MCF 10A (cell line): ENCODE measurements at regions of chr14 and their contacts with region 1.

Region 1: DNA sequence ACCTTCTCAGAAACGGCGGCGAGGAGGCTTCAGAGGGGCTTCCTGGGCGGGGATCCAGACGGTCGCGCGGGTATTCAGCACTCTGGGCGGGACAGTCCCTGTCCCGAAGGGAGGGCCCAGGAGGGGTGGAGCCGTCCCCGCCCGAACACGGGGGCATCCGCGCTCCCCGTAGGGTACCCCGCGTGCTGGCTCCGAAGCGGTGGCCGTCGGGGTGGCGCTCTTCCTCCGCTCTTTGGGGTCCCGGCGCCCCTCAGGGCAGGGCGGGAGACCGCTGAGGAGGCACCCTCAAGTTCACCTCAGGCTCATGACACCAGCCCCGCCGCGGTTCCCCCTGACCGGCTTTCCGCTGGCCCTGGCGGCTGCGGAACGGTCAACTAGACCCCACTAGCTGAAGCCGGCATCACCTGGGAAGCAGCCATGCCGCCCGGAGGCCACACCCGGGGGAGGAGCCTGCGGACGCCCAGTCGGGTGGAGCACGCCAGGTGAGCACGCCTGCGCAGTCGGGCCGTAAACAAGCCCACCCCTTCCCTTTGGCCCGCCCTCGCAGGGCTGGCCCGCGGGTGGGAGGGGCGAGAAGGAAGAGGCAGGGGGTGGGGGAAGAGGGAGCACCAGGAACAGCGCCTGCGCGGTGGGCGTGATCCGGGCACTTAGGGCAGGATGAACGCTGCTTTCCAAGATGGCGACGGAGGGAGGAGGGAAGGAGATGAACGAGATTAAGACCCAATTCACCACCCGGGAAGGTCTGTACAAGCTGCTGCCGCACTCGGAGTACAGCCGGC is at the start of gene WDR20:
- DNase-seq: peak; percentile 98
- H3K4me3 Mint-ChIP-seq: peak within 1 kb of the TSS; percentile 97
- H3K27ac Mint-ChIP-seq: peak within 1 kb of the TSS; percentile 91
- H3K4me1 Mint-ChIP-seq: peaks cover 14% of the 10 kb centered on the region
- H3K27me3 Mint-ChIP-seq: no peaks in the 10 kb centered on the region
- CTCF ChIP-seq: no peak
- total RNA-seq, gene WDR20: 23.8 and 24.8 TPM in 2 replicates

Region 2: DNA sequence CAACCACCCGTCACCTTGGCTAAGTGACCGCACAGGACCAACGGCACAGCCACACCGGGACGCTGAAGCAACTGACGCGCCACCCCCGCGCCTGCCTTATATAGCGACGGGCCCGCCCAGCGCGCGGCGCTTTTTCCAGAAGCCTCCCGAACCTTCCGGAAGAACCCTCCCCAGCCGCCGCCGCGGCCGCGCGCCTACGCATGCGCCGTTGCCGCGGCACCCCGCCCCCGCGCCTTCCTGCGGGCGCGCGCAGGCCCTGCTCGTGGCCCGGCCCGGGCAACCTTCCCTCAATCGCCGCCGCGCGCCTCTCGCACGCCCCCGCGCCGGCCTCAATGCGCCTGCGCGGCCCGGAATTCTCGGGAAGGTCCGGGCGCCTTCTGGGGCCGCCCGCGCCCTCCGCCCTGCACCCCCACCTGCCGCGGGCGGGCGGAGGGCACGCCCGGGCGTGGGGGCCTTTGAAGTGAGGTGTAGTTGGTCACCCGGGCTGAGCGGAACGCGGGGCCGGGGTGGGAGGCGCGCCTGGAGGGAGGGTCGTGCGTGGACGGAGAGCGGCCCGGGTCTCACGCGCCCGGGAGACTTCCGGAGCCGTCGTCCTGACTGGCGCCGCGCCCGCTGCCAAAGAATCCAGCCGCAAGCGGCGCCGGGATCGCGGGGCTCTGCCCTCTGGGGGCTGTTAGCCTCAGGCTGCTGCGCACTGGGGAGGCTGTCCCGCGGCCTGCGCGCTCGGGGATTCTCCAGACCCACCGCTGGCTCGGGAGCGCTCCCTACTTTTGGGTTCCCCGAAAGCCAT is 52.3 kb before region 1 on chr14 and contains the start of gene HSP90AA1:
- CTCF ChIA-PET with region 1: no interaction called
- POLR2A ChIA-PET with region 1: interaction called, 10 read pairs
- intact Hi-C with region 1: no loop called
- DNase-seq: peak; percentile 90
- H3K4me3 Mint-ChIP-seq: peak within 1 kb of the TSS; percentile 63
- H3K27ac Mint-ChIP-seq: peak within 1 kb of the TSS; percentile 92
- H3K4me1 Mint-ChIP-seq: peaks cover 31% of the 10 kb centered on the region
- H3K27me3 Mint-ChIP-seq: no peaks in the 10 kb centered on the region
- CTCF ChIP-seq: no peak
- total RNA-seq, gene HSP90AA1: 277 and 296 TPM in 2 replicates

Region 3: GRCh38 chr14:102125546-102125945 is 13.9 kb before region 1 on chr14:
- CTCF ChIA-PET with region 1: no interaction called
- POLR2A ChIA-PET with region 1: interaction called, 13 read pairs
- intact Hi-C with region 1: no loop called
- DNase-seq: peak; percentile 38
- H3K4me3 Mint-ChIP-seq: no peak overlapping the region
- H3K27ac Mint-ChIP-seq: no peak overlapping the region
- H3K4me1 Mint-ChIP-seq: peaks cover 13% of the 10 kb centered on the region
- H3K27me3 Mint-ChIP-seq: no peaks in the 10 kb centered on the region
- CTCF ChIP-seq: no peak

Region 4: DNA sequence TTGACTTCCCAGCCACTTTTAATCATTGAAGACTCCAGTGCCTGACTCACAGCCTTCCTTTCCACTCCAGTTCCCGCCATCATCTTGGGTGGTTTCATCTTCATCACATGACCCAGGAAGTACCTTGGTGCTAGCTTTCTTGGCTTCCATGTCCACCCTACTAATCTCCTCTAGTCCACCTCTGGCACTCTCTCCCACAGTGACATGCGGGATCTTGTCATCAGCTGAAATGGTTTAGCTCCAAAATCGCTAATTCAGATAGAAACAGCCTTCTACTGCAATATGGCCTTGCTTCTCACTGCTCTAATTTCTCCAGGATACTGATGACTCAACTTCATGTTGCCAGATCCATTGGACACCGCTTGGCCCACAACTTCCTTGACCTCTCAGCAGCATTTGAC is 24.8 kb after region 1 on chr14:
- CTCF ChIA-PET with region 1: interaction called, 3 read pairs
- POLR2A ChIA-PET with region 1: interaction called, 8 read pairs
- intact Hi-C with region 1: loop called (anchors 2 kb)
- DNase-seq: peak; percentile 35
- H3K4me3 Mint-ChIP-seq: no peak overlapping the region
- H3K27ac Mint-ChIP-seq: no peak overlapping the region
- H3K4me1 Mint-ChIP-seq: peaks cover 22% of the 10 kb centered on the region
- H3K27me3 Mint-ChIP-seq: no peaks in the 10 kb centered on the region
- CTCF ChIP-seq: no peak

Region 5: DNA sequence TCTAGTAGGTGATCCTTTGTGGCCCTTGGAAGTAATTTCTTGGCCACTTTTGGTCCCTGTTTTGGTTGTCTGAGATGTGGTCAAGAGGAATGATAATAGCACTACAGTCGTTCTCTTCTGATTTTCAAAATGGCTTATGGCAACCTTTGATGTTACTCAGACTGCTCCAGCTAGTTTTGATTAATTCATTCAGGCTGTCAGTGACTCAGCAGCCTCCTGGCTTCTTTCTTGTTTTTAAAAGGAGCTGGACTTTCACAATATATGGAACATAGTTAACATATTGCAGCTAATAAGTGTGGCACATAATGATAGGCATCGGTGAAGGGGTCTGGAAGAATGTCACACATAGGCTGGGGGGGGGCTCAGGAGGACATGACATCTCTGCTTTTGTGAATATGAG is 47.6 kb after region 1 on chr14:
- CTCF ChIA-PET with region 1: interaction called, 3 read pairs
- POLR2A ChIA-PET with region 1: interaction called, 16 read pairs
- intact Hi-C with region 1: no loop called
- DNase-seq: peak; percentile 79
- H3K4me3 Mint-ChIP-seq: peak overlapping the region; percentile 32
- H3K27ac Mint-ChIP-seq: peak overlapping the region; percentile 69
- H3K4me1 Mint-ChIP-seq: peaks cover 23% of the 10 kb centered on the region
- H3K27me3 Mint-ChIP-seq: no peaks in the 10 kb centered on the region
- CTCF ChIP-seq: no peak